Aorta (tissue), 5 donors: ENCODE measurements at regions of chr10 and their contacts with region 1.

Region 1: GRCh38 chr10:32367793-32368453 is 21.0 kb upstream of the EPC1 start:
- DNase-seq: peak; percentile 76 to 79
- ATAC-seq: peak; percentile 79
- H3K4me3 ChIP-seq: no peak overlapping the region
- H3K27ac ChIP-seq: no peak overlapping the region
- H3K4me1 ChIP-seq: peaks cover 0 to 3% of the 10 kb centered on the region in 2 donors
- H3K27me3 ChIP-seq: no peaks in the 10 kb centered on the region

Region 2: GRCh38 chr10:32295027-32295426 is 72.9 kb before region 1 on chr10:
- intact Hi-C with region 1: no loop called
- DNase-seq: no peak
- ATAC-seq: no peak
- H3K4me3 ChIP-seq: no peak overlapping the region
- H3K27ac ChIP-seq: no peak overlapping the region
- H3K4me1 ChIP-seq: peaks cover 0 to 8% of the 10 kb centered on the region in 2 donors
- H3K27me3 ChIP-seq: no peaks in the 10 kb centered on the region

Region 3: DNA sequence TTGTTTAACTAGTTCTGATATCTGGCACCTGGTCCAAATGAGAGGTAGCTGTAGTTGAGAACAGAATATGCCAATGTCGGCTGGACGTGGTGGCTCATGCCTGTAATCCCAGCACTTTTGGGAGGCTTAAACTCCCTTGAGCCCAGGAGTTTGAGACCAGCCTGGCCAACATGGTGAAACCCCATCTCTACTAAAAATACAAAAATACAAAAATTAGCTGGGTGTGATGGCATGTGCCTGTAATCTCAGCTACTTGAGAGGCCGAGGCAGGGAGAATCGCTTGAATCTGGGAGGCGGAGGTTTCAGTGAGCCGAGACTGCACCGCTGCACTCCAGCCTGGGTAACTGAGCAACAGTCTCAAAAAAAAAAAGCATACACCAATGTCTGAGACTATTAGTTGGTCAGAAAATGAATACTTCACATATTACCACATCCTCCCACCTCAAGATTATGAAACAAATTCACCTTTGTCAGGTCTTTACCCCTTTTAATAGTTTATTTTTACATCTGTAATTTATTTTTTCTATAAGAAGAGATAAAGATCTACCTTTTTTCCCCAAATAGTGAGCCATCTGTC is 59.8 kb before region 1 on chr10:
- intact Hi-C with region 1: no loop called
- DNase-seq: no peak
- ATAC-seq: no peak
- H3K4me3 ChIP-seq: no peak overlapping the region
- H3K27ac ChIP-seq: peak overlapping the region in 1 of 2 donors; percentile 19
- H3K4me1 ChIP-seq: peaks cover 0 to 3% of the 10 kb centered on the region in 2 donors
- H3K27me3 ChIP-seq: no peaks in the 10 kb centered on the region

Region 4: DNA sequence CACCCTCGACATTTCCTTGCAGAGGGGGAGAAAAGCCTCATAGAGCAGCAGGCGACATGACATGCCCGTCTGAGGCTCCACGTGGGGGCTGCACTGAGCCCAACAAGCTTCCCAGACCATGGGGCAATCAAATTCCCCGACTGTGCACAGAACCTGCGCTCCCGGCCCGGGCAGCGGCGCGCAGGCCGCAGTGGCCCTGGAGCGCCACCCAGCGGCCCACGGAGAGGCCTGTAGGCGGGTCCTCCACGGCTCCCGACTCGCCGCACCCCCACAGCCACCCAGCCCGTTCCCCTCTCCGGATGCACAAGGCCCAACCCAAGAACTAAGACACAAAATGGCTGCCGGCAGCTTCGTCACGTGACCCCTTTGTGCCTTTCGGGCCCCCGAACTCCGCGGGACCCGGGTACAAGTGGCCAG is 21.8 kb before region 1 on chr10:
- intact Hi-C with region 1: loop called in 1 of 2 experiments (anchors 2 kb)
- DNase-seq: peak; percentile 97 to 98
- ATAC-seq: peak; percentile 99
- H3K4me3 ChIP-seq: peak overlapping the region; percentile 76 to 90
- H3K27ac ChIP-seq: peak overlapping the region; percentile 89 to 99
- H3K4me1 ChIP-seq: no peaks in the 10 kb centered on the region
- H3K27me3 ChIP-seq: no peaks in the 10 kb centered on the region